CD8-positive, alpha-beta T cell (primary cell): ENCODE measurements at regions of chr4 and their contacts with region 1.

Region 1: GRCh38 chr4:674172-675035 is at the starts of genes ATP5ME and MYL5:
- DNase-seq: peak; percentile 95 to 99 (median 98)
- ATAC-seq: peak; percentile 91
- H3K4me3 ChIP-seq: peak within 1 kb of the TSS; percentile 79 to 92
- H3K4me3 Mint-ChIP-seq: peak within 1 kb of the TSS; percentile 91
- H3K27ac ChIP-seq: peak within 1 kb of the TSS; percentile 93 to 94
- H3K27ac Mint-ChIP-seq: peak within 1 kb of the TSS; percentile 88
- H3K4me1 ChIP-seq: peaks cover 21% of the 10 kb centered on the region
- H3K4me1 Mint-ChIP-seq: peaks cover 7% of the 10 kb centered on the region
- H3K27me3 ChIP-seq: no peaks in the 10 kb centered on the region
- H3K27me3 Mint-ChIP-seq: no peaks in the 10 kb centered on the region
- CTCF ChIP-seq: peak; percentile 87
- total RNA-seq, gene ATP5ME: 113 to 114 TPM
- total RNA-seq, gene MYL5: 27.2 to 28.7 TPM

Region 2: GRCh38 chr4:124275-125081 is 549.9 kb before region 1 on chr4 and contains the start of gene ZNF718:
- CTCF ChIA-PET with region 1: no interaction called
- POLR2A ChIA-PET with region 1: no interaction called
- intact Hi-C with region 1: loop called in 1 of 2 experiments (anchors 5 kb)
- DNase-seq: peak; percentile 78 to 97 (median 91)
- ATAC-seq: peak; percentile 95
- H3K4me3 ChIP-seq: peak within 1 kb of the TSS; percentile 78 to 96
- H3K4me3 Mint-ChIP-seq: peak within 1 kb of the TSS; percentile 99
- H3K27ac ChIP-seq: peak within 1 kb of the TSS; percentile 75 to 83
- H3K27ac Mint-ChIP-seq: peak within 1 kb of the TSS; percentile 99
- H3K4me1 ChIP-seq: peaks cover 29% of the 10 kb centered on the region
- H3K4me1 Mint-ChIP-seq: peaks cover 44% of the 10 kb centered on the region
- H3K27me3 ChIP-seq: no peaks in the 10 kb centered on the region
- H3K27me3 Mint-ChIP-seq: no peaks in the 10 kb centered on the region
- CTCF ChIP-seq: no peak
- total RNA-seq, gene ZNF718: 3.6 to 4.0 TPM

Region 3: GRCh38 chr4:337143-337931 is 337.1 kb before region 1 on chr4 and contains the start of gene ZNF141:
- CTCF ChIA-PET with region 1: no interaction called
- POLR2A ChIA-PET with region 1: no interaction called
- intact Hi-C with region 1: loop called (anchors 5 kb)
- DNase-seq: peak; percentile 84 to 97 (median 91)
- ATAC-seq: peak; percentile 88
- H3K4me3 ChIP-seq: peak within 1 kb of the TSS; percentile 94 to 95
- H3K4me3 Mint-ChIP-seq: peak within 1 kb of the TSS; percentile 99
- H3K27ac ChIP-seq: peak within 1 kb of the TSS; percentile 90 to 95
- H3K27ac Mint-ChIP-seq: peak within 1 kb of the TSS; percentile 99
- H3K4me1 ChIP-seq: peaks cover 17% of the 10 kb centered on the region
- H3K4me1 Mint-ChIP-seq: peaks cover 46% of the 10 kb centered on the region
- H3K27me3 ChIP-seq: no peaks in the 10 kb centered on the region
- H3K27me3 Mint-ChIP-seq: no peaks in the 10 kb centered on the region
- CTCF ChIP-seq: no peak
- total RNA-seq, gene ZNF141: 16.3 to 19.9 TPM

Region 4: DNA sequence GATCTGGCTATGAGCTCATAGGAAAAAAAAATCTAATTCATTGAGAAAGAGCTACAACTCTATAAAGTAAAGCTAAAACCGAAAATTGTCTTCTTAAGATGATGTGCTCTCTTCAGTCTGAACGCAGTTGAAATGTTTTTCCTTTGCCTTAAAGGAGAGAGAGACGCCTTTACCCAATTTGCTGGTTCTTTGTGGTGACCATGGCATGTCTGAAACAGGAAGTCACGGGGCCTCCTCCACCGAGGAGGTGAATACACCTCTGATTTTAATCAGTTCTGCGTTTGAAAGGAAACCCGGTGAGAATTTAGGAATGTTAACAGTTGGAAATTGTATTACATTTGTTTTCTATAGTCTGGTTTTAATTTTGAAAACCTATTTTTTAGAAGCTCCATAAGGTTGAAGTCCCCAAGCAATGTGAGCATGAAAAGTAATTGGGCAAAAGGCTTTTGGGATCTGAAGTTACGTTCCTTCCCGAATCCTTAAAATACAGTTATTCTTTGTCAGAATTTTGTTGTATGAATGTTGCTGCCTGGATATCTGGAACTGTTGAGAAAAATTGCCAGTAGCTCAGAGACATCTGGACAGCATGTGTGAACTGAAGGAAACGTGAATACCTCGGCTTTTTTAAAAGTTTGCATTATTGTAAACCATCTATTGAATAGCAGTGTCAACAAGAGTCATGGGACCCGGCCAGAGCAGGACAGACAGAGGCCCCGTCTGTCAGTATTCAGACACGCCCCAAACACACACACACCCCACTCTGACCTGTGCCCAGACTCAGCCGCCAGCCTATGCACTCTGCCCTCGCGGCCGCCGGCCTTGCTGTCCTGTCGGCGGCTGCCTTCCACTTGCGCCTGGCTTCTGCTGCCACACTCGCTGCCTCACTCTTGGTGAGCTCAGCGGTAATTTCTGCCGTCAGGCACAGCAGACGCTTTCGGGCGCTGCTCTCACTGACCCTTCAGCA is 165.4 kb before region 1 on chr4:
- CTCF ChIA-PET with region 1: no interaction called
- POLR2A ChIA-PET with region 1: no interaction called
- intact Hi-C with region 1: loop called in 1 of 2 experiments (anchors 10 kb)
- DNase-seq: no peak
- ATAC-seq: no peak
- H3K4me3 ChIP-seq: no peak overlapping the region
- H3K4me3 Mint-ChIP-seq: no peak overlapping the region
- H3K27ac ChIP-seq: no peak overlapping the region
- H3K27ac Mint-ChIP-seq: peak overlapping the region; percentile 84
- H3K4me1 ChIP-seq: peaks cover 8% of the 10 kb centered on the region
- H3K4me1 Mint-ChIP-seq: peaks cover 27% of the 10 kb centered on the region
- H3K27me3 ChIP-seq: no peaks in the 10 kb centered on the region
- H3K27me3 Mint-ChIP-seq: no peaks in the 10 kb centered on the region
- CTCF ChIP-seq: no peak

Region 5: DNA sequence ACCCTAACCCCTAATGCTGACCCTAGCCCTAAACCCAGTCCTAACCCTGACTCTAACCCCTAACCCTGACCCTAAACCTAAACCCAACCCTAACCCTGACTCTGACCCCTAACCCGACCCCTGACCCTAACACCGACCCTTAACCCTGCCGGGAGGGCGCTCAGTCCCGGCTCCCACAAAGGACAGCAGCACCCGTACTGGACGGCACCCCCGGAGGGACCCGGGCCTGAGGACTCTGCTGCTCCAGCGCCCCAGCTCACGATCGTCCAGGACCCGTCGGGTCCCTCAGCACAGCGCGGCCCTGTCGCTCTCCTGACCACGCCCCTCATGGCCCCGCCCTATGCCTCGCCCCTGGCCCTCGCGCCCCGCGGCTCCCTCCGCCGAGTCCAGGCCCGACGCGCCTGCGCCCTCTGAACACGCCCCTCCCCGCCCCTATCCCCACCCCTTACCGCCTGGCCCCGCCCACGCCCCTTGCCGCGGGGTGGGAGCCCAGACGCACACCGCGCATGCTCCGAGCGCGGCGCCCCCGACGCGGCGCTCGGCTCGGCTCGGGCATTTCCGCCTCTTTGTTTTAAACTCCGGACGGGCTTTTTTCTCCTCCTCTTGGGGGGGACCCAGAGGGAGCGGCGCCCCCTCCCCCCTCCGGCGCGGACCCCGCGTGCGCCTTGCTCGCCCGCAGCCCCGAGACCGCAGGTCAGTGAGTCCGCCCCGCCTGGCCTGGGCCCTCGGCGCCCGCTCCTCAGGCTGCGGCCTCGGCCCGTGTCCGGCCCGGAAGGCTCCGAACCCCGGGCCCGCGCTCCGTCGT is 31.1 kb after region 1 on chr4 and contains the start of gene PCGF3:
- CTCF ChIA-PET with region 1: no interaction called
- POLR2A ChIA-PET with region 1: no interaction called
- intact Hi-C with region 1: loop called (anchors 1 kb)
- DNase-seq: peak; percentile 92 to 97 (median 95)
- ATAC-seq: peak; percentile 98
- H3K4me3 ChIP-seq: peak within 1 kb of the TSS; percentile 75 to 89
- H3K4me3 Mint-ChIP-seq: peak within 1 kb of the TSS; percentile 82
- H3K27ac ChIP-seq: peak within 1 kb of the TSS; percentile 68 to 75
- H3K27ac Mint-ChIP-seq: peak within 1 kb of the TSS; percentile 60
- H3K4me1 ChIP-seq: peaks cover 24% of the 10 kb centered on the region
- H3K4me1 Mint-ChIP-seq: peaks cover 28% of the 10 kb centered on the region
- H3K27me3 ChIP-seq: no peaks in the 10 kb centered on the region
- H3K27me3 Mint-ChIP-seq: no peaks in the 10 kb centered on the region
- CTCF ChIP-seq: no peak
- total RNA-seq, gene PCGF3: 39.1 to 39.5 TPM

Region 6: DNA sequence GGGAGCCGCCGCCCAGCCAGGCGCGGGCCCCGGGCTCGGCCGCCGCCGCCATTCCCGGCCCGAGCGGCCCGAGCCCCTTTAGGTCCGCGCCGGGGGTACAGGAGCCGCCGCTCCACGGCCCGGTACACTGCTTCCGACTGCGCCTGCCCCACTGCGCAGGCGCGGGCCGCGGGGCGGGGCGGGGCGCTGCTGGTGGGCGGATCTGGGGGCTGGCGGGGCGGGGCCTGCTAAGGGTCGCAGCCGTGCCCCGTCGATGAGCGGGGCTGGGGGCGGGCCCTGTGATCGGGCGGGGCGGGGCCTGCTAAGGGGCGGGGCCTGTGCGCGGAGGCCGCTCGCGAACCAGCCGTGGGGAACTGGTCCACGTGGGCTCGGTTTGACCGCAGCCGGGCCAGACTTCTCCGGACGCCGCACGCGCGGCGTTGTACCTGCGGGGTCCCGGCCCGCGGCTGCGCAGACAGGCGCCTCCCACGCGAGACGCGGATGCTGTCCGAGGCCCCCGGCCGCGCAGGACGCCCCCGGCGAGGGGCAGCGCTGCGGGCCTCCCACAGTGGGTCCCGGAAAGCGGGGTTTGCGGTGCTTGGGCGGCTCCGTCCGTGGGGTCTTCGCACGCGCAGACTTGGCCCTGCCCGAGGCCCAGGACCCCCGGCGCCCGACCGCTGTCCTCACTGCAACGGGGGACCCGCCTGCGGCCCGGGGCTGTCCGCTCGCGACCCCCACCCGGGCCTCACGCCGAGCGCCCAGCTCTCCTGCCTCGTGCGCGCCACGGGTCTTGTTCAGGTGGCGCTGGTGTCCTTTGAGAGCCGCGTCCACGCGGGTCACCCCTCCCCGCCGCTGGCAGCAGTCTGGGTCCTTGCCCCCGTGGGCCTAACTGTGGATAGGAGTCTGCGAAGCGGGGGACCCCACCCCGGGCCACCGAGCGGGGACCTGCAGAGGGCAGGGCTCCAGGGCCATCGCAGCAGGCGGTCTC is 299.3 kb after region 1 on chr4 and contains the start of gene DGKQ:
- CTCF ChIA-PET with region 1: no interaction called
- POLR2A ChIA-PET with region 1: no interaction called
- intact Hi-C with region 1: loop called in 1 of 2 experiments (anchors 1 kb)
- DNase-seq: peak; percentile 83 to 95 (median 89)
- ATAC-seq: peak; percentile 82
- H3K4me3 ChIP-seq: peak within 1 kb of the TSS; percentile 74 to 77
- H3K4me3 Mint-ChIP-seq: peak within 1 kb of the TSS; percentile 62
- H3K27ac ChIP-seq: peak within 1 kb of the TSS; percentile 56 to 85
- H3K27ac Mint-ChIP-seq: peak within 1 kb of the TSS; percentile 37
- H3K4me1 ChIP-seq: peaks cover 32% of the 10 kb centered on the region
- H3K4me1 Mint-ChIP-seq: peaks cover 17% of the 10 kb centered on the region
- H3K27me3 ChIP-seq: no peaks in the 10 kb centered on the region
- H3K27me3 Mint-ChIP-seq: no peaks in the 10 kb centered on the region
- CTCF ChIP-seq: no peak
- total RNA-seq, gene DGKQ: 28.2 to 29.7 TPM